Activated T-helper 2 cell treated with anti-CD3 and anti-CD28 coated beads, Interferon-gamma antibody, Interleukin-2, Interleukin-4, amounts not matched to agents 10 μg/mL and 5 μg/mL and 100 μg/mL, durations not matched to agents 14 hours and 24 hours and 36 hours (primary cell): ENCODE measurements at regions of chr2 and their contacts with region 1.

Region 1: GRCh38 chr2:109715313-109715805 is 78.7 kb upstream of the RGPD5 start:
- DNase-seq: no peak
- H3K4me3 Mint-ChIP-seq: no peak overlapping the region
- H3K27ac Mint-ChIP-seq: no peak overlapping the region
- H3K4me1 Mint-ChIP-seq: no peaks in the 10 kb centered on the region
- H3K27me3 Mint-ChIP-seq: peaks cover 2% of the 10 kb centered on the region

Region 2: GRCh38 chr2:109545828-109546713 is 169.3 kb before region 1 on chr2:
- intact Hi-C with region 1: loop called (anchors 5 kb)
- DNase-seq: peak; percentile 19
- H3K4me3 Mint-ChIP-seq: no peak overlapping the region
- H3K27ac Mint-ChIP-seq: no peak overlapping the region
- H3K4me1 Mint-ChIP-seq: no peaks in the 10 kb centered on the region
- H3K27me3 Mint-ChIP-seq: peaks cover 17% of the 10 kb centered on the region